Breast epithelium (tissue), 4 donors: ENCODE measurements at regions of chr6 and their contacts with region 1.

Region 1: GRCh38 chr6:162301128-162301527 is 426.4 kb downstream of the PRKN start:
- DNase-seq: no peak
- H3K4me3 ChIP-seq: no peak overlapping the region
- H3K27ac ChIP-seq: no peak overlapping the region
- H3K4me1 ChIP-seq: no peaks in the 10 kb centered on the region
- H3K27me3 ChIP-seq: no peaks in the 10 kb centered on the region
- CTCF ChIP-seq: no peak
- POLR2A ChIP-seq: no peak

Region 2: GRCh38 chr6:162234631-162235030 is 66.5 kb before region 1 on chr6:
- intact Hi-C with region 1: loop called (anchors 2 kb)
- DNase-seq: no peak
- H3K4me3 ChIP-seq: no peak overlapping the region
- H3K27ac ChIP-seq: no peak overlapping the region
- H3K4me1 ChIP-seq: no peaks in the 10 kb centered on the region
- H3K27me3 ChIP-seq: no peaks in the 10 kb centered on the region
- CTCF ChIP-seq: no peak
- POLR2A ChIP-seq: no peak